Activated CD4-positive, alpha-beta memory T cell treated with anti-CD3 and anti-CD28 coated beads, Interleukin-2, amount 10 ng/mL, durations not matched to agents 7 days and 5 days (primary cell): ENCODE measurements at regions of chr9 and their contacts with region 1.

Region 1: DNA sequence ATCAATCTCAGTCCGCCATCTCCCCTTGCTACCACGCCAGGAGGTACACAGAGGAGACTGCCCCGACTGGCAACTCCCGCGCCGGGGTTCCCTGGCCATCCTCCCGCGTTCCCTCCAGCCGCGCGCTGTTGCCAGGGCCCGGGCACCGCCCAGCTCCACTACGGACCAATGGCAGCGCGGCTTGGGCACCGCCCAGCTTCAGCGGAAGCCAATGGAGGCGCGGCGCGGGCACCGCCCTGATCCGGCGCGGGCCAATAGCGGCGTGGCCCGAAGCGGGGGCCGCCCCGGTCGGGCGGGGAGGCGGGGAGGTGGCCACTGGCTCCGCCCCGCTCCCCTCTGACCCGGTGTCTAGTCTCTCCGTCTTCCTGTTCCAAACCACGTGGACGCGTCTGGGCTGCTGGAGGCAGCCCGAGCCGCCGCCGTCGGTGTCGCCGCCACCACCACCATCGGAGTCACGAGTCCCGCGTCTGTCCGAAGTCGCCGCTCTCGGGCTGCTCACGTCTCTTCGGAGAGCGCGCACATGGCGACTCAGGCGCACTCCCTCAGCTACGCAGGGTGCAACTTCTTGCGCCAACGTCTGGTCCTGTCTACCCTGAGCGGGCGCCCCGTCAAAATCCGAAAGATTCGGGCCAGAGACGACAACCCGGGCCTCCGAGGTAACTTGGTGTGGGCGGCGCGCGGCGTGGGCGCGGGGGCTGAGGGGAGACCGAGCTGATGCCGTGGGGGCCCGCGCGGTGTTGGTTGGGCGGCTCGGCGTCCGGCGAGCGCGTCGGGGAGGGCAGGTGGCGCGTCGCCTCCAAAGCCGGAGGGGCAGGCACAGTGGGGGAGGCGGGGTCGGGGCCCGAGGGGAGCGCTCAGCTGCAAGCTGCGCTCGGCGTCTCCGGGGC is at the start of gene RCL1:
- DNase-seq: peak; percentile 98
- H3K4me3 Mint-ChIP-seq: peak within 1 kb of the TSS; percentile 94
- H3K27ac Mint-ChIP-seq: peak within 1 kb of the TSS; percentile 89
- H3K4me1 Mint-ChIP-seq: peaks cover 44% of the 10 kb centered on the region
- H3K27me3 Mint-ChIP-seq: no peaks in the 10 kb centered on the region
- total RNA-seq, gene RCL1: 11.5 to 12.3 TPM

Region 2: GRCh38 chr9:4740638-4741364 is 52.0 kb before region 1 on chr9 and contains the start of gene AK3:
- CTCF ChIA-PET with region 1: no interaction called
- POLR2A ChIA-PET with region 1: interaction called, 21 read pairs
- DNase-seq: peak; percentile 88
- H3K4me3 Mint-ChIP-seq: peak within 1 kb of the TSS; percentile 92
- H3K27ac Mint-ChIP-seq: peak within 1 kb of the TSS; percentile 85
- H3K4me1 Mint-ChIP-seq: peaks cover 39% of the 10 kb centered on the region
- H3K27me3 Mint-ChIP-seq: no peaks in the 10 kb centered on the region
- total RNA-seq, gene AK3: 34.0 to 34.6 TPM

Region 3: GRCh38 chr9:4781408-4781807 is 11.4 kb before region 1 on chr9:
- CTCF ChIA-PET with region 1: no interaction called
- POLR2A ChIA-PET with region 1: no interaction called
- DNase-seq: no peak
- H3K4me3 Mint-ChIP-seq: no peak overlapping the region
- H3K27ac Mint-ChIP-seq: no peak overlapping the region
- H3K4me1 Mint-ChIP-seq: no peaks in the 10 kb centered on the region
- H3K27me3 Mint-ChIP-seq: peaks cover 5% of the 10 kb centered on the region

Region 4: DNA sequence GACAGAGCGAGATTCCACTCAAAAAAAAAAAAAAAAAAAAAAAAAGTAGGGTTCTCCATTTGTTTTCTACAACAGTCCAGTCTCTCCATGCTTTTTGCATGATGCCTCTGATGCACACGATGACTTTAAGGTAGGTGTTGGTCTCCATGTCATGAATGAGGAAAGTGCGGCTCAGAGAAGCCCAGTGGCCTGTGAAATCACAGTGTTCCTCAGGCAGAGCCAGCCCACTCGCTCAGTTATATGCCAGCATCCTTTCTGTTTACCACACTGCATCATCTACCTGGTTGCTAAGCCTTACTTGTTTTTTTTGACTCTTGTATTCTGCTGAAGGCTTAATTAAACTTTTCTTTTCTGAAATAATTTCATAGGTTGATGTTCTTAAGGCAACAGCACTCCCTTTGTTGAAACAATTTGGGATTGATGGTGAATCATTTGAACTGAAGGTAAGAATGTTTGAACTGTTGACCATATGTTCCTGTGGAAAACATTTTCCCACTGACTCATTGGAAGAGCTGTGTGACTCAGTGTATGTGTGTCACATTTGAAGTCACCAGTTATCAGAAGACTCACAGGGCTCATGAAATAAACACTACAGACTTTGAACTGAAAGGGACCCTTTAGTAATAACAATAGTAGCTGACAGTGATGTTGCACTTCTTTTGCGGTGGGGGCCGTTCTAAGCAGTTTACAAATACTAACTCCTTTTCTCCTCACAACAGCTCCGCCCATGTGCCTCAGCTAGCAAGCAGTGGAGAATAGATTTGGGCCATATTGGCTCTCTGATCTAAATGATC is 40.2 kb after region 1 on chr9:
- CTCF ChIA-PET with region 1: interaction called, 3 read pairs
- POLR2A ChIA-PET with region 1: interaction called, 12 read pairs
- DNase-seq: peak; percentile 50
- H3K4me3 Mint-ChIP-seq: no peak overlapping the region
- H3K27ac Mint-ChIP-seq: peak overlapping the region; percentile 61
- H3K4me1 Mint-ChIP-seq: peaks cover 35% of the 10 kb centered on the region
- H3K27me3 Mint-ChIP-seq: no peaks in the 10 kb centered on the region

Region 5: GRCh38 chr9:4862506-4863250 is 69.9 kb after region 1 on chr9:
- CTCF ChIA-PET with region 1: no interaction called
- POLR2A ChIA-PET with region 1: interaction called, 21 read pairs
- DNase-seq: no peak
- H3K4me3 Mint-ChIP-seq: no peak overlapping the region
- H3K27ac Mint-ChIP-seq: no peak overlapping the region
- H3K4me1 Mint-ChIP-seq: peaks cover 38% of the 10 kb centered on the region
- H3K27me3 Mint-ChIP-seq: no peaks in the 10 kb centered on the region

Region 6: DNA sequence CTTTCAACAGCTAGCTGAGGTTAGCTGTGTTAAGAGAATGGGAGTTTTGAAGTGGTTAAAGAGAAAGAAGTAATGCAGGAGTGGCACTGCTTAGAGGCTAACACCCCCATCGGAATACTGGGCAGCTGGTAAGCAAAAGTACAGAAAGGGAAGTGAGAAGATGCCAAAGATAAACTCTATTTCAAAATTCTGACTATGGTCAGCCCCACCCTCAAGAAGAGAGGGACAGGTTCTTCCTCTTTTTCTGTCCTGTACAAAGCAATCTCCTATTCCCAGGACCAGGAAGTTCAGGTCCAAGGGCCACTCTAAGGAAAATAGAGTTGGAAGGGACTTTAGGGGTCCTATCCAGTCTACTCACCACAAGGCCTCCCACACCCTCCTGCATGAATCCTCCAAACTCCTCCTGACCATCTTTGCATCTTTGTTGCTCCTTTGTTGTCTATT is 146.3 kb after region 1 on chr9:
- CTCF ChIA-PET with region 1: interaction called, 3 read pairs
- POLR2A ChIA-PET with region 1: interaction called, 15 read pairs
- DNase-seq: no peak
- H3K4me3 Mint-ChIP-seq: no peak overlapping the region
- H3K27ac Mint-ChIP-seq: peak overlapping the region; percentile 80
- H3K4me1 Mint-ChIP-seq: peaks cover 71% of the 10 kb centered on the region
- H3K27me3 Mint-ChIP-seq: no peaks in the 10 kb centered on the region